ENCODE measurements at regions of chr19 and their contacts with region 1.

Region 1: DNA sequence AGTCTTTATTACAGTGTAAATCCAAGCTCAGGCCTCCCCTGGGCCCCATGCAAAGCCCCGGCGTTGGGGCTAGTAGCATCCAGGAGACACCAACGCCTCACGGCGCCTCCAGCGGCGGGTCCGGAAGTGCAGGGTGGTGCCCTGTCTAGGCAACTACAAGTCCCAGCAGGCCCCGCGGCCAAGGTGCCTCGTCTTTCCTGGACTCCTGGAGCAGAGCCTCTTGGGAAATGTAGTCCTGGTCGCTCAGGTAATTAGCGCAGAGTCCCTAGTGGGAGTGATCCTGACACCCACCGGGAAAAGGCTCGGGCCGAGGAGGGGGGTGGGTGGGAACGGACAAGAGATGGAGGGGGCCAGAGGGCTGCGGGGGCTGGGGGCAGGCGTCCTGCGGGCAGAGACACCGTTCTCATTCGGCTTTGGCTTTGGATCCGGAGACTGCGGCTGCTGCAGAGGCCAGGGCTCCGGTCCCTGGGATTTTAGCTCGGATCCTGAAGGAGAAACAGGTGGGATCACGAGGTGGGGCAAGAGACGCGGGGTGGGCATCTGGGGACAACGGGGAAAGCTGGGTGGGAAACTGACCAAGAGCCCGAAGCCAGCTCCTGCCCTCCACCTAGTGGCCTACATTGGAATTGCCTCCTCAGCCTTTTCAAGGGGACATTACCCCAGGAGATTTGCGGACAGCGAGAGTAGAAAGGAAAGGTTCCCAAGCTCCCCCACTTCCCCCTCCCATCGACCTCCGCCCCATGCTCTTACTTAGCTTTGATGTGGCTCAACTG is 11.4 kb downstream of the RTN2 start:
- DNase-seq: peak; percentile 99
- ATAC-seq: peak; percentile 98
- H3K4me3 Mint-ChIP-seq: peak overlapping the region; percentile 85
- H3K27ac Mint-ChIP-seq: peak overlapping the region; percentile 90
- H3K4me1 Mint-ChIP-seq: peaks cover 12% of the 10 kb centered on the region
- H3K27me3 Mint-ChIP-seq: no peaks in the 10 kb centered on the region

Region 2: DNA sequence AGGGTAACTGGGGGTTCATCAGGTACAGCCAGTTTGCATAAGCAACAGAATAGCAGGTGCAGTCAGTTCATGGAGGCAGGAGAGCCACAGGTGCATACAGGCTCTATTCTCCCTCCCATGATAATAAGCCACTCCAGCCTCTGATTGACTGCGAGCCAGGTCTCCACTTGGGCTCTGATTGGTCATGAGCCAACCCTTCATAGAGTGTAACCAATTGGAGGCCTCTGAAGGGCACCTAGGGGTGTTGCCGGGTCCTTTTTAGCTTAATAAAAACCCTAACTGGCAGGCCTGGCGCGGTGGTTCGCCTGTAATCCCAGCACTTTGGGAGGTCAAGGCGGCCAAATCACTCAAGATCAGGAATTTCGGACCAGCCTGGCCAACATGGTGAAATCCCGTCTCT is 154.1 kb before region 1 on chr19:
- CTCF ChIA-PET with region 1: no interaction called
- DNase-seq: no peak
- ATAC-seq: no peak
- H3K4me3 Mint-ChIP-seq: no peak overlapping the region
- H3K27ac Mint-ChIP-seq: no peak overlapping the region
- H3K4me1 Mint-ChIP-seq: peaks cover under 1% of the 10 kb centered on the region
- H3K27me3 Mint-ChIP-seq: peaks cover 10% of the 10 kb centered on the region

Region 3: GRCh38 chr19:45405435-45406225 is 79.9 kb before region 1 on chr19:
- CTCF ChIA-PET with region 1: interaction called, 15 read pairs
- DNase-seq: peak; percentile 92
- ATAC-seq: peak; percentile 65
- H3K4me3 Mint-ChIP-seq: peak overlapping the region; percentile 94
- H3K27ac Mint-ChIP-seq: peak overlapping the region; percentile 88
- H3K4me1 Mint-ChIP-seq: peaks cover 31% of the 10 kb centered on the region
- H3K27me3 Mint-ChIP-seq: peaks cover 30% of the 10 kb centered on the region

Region 4: GRCh38 chr19:45469132-45469944 is 16.2 kb before region 1 on chr19:
- CTCF ChIA-PET with region 1: interaction called, 31 read pairs
- DNase-seq: peak; percentile 96
- ATAC-seq: peak; percentile 32
- H3K4me3 Mint-ChIP-seq: peak overlapping the region; percentile 86
- H3K27ac Mint-ChIP-seq: peak overlapping the region; percentile 96
- H3K4me1 Mint-ChIP-seq: peaks cover 24% of the 10 kb centered on the region
- H3K27me3 Mint-ChIP-seq: peaks cover 26% of the 10 kb centered on the region

Region 5: GRCh38 chr19:45506246-45506990 is 20.9 kb after region 1 on chr19:
- CTCF ChIA-PET with region 1: interaction called, 108 read pairs
- DNase-seq: peak; percentile 98
- ATAC-seq: peak; percentile 76
- H3K4me3 Mint-ChIP-seq: peak overlapping the region; percentile 99
- H3K27ac Mint-ChIP-seq: peak overlapping the region; percentile 98
- H3K4me1 Mint-ChIP-seq: peaks cover 40% of the 10 kb centered on the region
- H3K27me3 Mint-ChIP-seq: no peaks in the 10 kb centered on the region

Region 6: DNA sequence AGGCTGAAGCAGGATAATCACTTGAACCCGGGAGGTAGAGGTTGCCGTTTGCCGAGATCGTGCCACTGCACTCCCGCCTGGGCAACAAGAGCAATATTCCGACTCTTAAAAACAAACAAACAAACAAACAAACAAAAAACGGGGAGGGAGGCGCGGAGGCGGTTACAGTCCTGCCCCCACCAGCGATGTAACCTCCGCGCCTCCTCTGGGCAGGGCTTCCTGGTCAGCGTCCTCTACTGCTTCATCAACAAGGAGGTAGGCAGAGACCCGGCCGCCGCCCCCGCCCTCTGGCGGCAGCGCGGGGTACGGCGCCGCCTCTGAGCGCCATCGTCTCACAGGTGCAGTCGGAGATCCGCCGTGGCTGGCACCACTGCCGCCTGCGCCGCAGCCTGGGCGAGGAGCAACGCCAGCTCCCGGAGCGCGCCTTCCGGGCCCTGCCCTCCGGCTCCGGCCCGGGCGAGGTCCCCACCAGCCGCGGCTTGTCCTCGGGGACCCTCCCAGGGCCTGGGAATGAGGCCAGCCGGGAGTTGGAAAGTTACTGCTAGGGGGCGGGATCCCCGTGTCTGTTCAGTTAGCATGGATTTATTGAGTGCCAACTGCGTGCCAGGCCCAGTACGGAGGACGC is 196.0 kb after region 1 on chr19:
- CTCF ChIA-PET with region 1: interaction called, 12 read pairs
- DNase-seq: peak; percentile 91
- ATAC-seq: peak; percentile 91
- H3K4me3 Mint-ChIP-seq: peak overlapping the region; percentile 76
- H3K27ac Mint-ChIP-seq: peak overlapping the region; percentile 86
- H3K4me1 Mint-ChIP-seq: peaks cover 23% of the 10 kb centered on the region
- H3K27me3 Mint-ChIP-seq: peaks cover 4% of the 10 kb centered on the region